Activated naive CD4-positive, alpha-beta T cell treated with anti-CD3 and anti-CD28 coated beads for 36 hours (primary cell): ENCODE measurements at regions of chr14 and their contacts with region 1.

Region 1: GRCh38 chr14:50773632-50774541 is 57.1 kb downstream of the NIN start:
- DNase-seq: peak; percentile 61
- H3K4me3 Mint-ChIP-seq: no peak overlapping the region
- H3K27ac Mint-ChIP-seq: no peak overlapping the region
- H3K4me1 Mint-ChIP-seq: peaks cover 21% of the 10 kb centered on the region
- H3K27me3 Mint-ChIP-seq: no peaks in the 10 kb centered on the region

Region 2: DNA sequence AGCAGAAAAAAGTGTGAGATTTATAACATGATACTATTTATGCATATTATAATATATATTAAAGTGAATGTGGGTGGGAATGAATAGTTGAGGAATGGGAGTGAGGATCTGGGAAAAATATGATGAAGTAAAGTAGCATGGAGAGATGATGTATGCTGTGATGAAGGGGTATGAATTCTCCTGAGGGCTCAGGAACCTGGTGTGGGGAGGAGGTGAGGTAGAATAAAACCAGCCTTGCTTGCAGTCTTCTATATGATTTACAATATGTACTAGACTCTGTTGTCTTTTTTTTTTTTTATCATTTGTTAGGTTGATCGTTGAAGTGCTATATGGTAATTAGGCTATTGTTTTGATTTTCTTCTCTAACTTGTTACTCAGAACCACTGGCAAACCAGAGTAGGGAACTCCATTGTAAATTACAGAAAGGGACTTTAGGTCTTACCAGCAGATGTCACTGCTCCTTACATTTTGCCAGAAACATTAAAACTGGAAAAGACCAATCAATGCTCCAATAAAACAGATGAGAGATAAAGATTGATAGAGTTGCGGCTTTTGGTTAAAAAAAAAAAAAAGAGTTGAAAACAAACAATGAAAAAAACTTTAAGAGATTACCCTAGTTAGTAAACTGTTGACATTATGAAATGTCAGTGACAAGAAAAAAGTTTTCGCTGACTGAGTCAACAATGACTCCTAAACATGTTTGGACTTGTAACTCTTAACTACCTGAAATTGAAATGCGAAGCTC is 174.0 kb before region 1 on chr14:
- CTCF ChIA-PET with region 1: interaction called, 14 read pairs
- intact Hi-C with region 1: loop called (anchors 1 kb)
- DNase-seq: no peak
- H3K4me3 Mint-ChIP-seq: no peak overlapping the region
- H3K27ac Mint-ChIP-seq: no peak overlapping the region
- H3K4me1 Mint-ChIP-seq: no peaks in the 10 kb centered on the region
- H3K27me3 Mint-ChIP-seq: no peaks in the 10 kb centered on the region

Region 3: DNA sequence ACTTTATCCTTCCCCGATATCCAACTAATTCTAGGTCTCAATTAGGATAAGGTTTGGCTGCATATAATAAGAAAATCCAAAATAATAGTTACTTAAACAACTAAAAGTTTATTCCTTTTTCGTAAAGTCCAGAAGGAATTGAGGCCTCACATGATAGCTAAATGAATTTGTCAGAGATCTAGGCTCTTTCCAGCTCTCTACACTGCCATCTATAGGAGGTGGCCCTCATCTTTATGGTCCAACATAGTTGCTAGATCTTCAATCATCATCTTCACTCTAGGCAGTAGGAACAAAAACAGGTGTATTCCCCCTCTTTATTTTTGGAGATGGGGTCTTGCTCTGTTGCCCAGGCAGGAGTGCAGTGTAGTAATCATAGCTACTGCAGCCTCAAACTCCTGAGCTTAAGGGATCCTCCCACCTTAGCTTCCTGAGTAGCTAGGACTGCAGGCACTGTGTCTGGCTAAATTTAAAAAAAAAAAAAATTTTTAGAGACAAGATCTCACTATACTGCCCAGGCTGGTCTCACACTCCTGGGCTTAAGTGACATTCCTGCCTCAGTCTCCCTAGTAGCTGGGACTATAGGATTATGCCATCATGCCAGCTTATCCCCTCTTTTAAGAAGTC is 59.3 kb before region 1 on chr14:
- CTCF ChIA-PET with region 1: interaction called, 9 read pairs
- intact Hi-C with region 1: loop called (anchors 2 kb)
- DNase-seq: peak; percentile 30
- H3K4me3 Mint-ChIP-seq: no peak overlapping the region
- H3K27ac Mint-ChIP-seq: no peak overlapping the region
- H3K4me1 Mint-ChIP-seq: no peaks in the 10 kb centered on the region
- H3K27me3 Mint-ChIP-seq: peaks cover 3% of the 10 kb centered on the region

Region 4: DNA sequence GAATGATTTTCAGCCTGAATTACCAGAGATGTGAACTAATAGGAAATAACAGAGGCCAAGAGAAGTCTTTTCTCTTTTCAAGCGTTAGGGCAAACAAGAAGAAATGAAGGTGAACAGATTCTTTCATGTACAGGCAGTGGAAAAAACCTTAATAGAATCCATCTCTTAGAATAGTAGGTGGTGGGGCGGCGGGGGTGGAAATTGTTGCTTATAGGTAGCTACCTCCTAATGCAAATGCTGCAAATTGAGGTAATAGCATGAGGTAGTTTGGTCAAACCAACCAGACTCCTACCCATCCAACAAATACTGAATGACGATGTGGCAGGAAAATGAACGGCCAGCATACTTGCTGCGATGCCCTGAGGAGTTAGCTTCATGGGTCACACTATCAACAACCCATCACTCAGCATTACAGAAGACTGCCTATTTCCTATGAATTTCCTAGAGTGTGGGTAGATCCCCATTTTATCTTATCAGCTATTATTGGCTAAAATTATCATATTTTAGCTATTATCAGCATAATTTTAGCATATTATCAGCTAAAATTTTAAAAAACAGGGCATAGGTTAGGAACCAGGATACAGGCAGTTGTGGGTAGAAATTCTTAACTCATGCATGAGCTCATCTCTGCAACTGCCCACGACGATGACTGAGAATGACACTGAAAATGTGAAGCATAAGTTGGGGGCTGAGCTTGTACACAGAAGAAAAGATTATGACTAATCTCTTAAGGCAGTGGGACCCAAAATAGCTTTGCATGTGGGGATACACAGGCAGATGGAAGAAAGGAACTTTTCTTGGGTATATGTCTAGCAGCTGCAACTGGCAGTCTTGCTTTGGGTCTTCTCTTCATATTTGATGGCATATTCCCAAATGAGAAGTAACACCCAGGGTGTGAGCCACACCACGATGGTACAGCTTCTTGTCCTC is 11.6 kb before region 1 on chr14:
- CTCF ChIA-PET with region 1: interaction called, 58 read pairs
- intact Hi-C with region 1: no loop called
- DNase-seq: peak; percentile 74
- H3K4me3 Mint-ChIP-seq: no peak overlapping the region
- H3K27ac Mint-ChIP-seq: no peak overlapping the region
- H3K4me1 Mint-ChIP-seq: peaks cover 28% of the 10 kb centered on the region
- H3K27me3 Mint-ChIP-seq: no peaks in the 10 kb centered on the region